ENCODE measurements at regions of chr10 and their contacts with region 1.

Region 1: GRCh38 chr10:19922236-19922963 is 106.2 kb downstream of the PLXDC2 start:
- DNase-seq: no peak

Region 2: GRCh38 chr10:19834952-19835506 is 87.4 kb before region 1 on chr10:
- intact Hi-C with region 1: loop called (anchors 5 kb)
- DNase-seq: no peak